MCF 10A (cell line): ENCODE measurements at regions of chr15 and their contacts with region 1.

Region 1: GRCh38 chr15:52018693-52019387 is at the start of gene MAPK6:
- DNase-seq: peak; percentile 90
- H3K4me3 Mint-ChIP-seq: peak within 1 kb of the TSS; percentile 95
- H3K27ac Mint-ChIP-seq: peak within 1 kb of the TSS; percentile 99
- H3K4me1 Mint-ChIP-seq: peaks cover 17% of the 10 kb centered on the region
- H3K27me3 Mint-ChIP-seq: no peaks in the 10 kb centered on the region
- CTCF ChIP-seq: no peak
- total RNA-seq, gene MAPK6: 106 and 114 TPM in 2 replicates

Region 2: GRCh38 chr15:51842852-51843737 is 175.7 kb before region 1 on chr15:
- CTCF ChIA-PET with region 1: no interaction called
- POLR2A ChIA-PET with region 1: no interaction called
- intact Hi-C with region 1: no loop called
- DNase-seq: peak; percentile 75
- H3K4me3 Mint-ChIP-seq: peak overlapping the region; percentile 9
- H3K27ac Mint-ChIP-seq: peak overlapping the region; percentile 69
- H3K4me1 Mint-ChIP-seq: peaks cover 54% of the 10 kb centered on the region
- H3K27me3 Mint-ChIP-seq: no peaks in the 10 kb centered on the region
- CTCF ChIP-seq: no peak

Region 3: DNA sequence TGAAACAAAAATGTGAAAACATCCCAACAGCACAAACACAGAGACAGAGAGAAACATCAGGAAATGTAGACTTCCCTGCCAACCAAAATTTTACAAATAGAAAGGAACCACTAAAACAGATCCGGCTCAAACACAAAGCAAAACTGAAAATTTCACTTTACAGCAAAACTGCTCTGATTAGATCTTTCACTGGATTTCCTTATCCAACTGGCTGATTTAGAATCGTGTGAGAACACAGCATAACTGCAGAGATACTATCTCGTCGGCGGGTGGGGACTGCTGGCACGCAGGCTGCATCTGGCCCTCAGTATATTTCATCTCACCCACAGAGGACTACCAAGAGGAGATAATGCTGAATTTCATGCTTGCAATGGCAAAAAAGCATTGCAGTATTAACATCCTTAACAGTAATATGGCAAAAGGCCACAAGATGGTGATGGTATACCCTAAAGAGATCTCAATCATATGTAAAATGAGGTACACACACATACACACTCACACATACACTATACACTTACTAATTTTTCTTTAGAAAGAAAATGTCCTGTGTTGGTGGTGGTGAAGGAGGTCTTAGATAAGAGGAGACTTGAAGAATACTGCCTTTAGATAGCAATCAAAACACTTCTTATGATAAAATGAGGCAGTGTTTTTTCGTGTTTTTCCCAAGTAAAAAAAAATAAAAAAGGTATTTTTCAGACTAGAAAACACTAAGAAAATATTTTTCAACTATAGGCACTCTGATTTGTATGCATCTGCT is 36.6 kb before region 1 on chr15:
- CTCF ChIA-PET with region 1: interaction called, 3 read pairs
- POLR2A ChIA-PET with region 1: interaction called, 38 read pairs
- intact Hi-C with region 1: loop called (anchors 1 kb)
- DNase-seq: peak; percentile 78
- H3K4me3 Mint-ChIP-seq: peak overlapping the region; percentile 31
- H3K27ac Mint-ChIP-seq: peak overlapping the region; percentile 77
- H3K4me1 Mint-ChIP-seq: peaks cover 12% of the 10 kb centered on the region
- H3K27me3 Mint-ChIP-seq: no peaks in the 10 kb centered on the region
- CTCF ChIP-seq: peak; percentile 82

Region 4: GRCh38 chr15:52005748-52006701 is 12.8 kb before region 1 on chr15:
- CTCF ChIA-PET with region 1: interaction called, 3 read pairs
- POLR2A ChIA-PET with region 1: interaction called, 42 read pairs
- intact Hi-C with region 1: no loop called
- DNase-seq: peak; percentile 48
- H3K4me3 Mint-ChIP-seq: no peak overlapping the region
- H3K27ac Mint-ChIP-seq: peak overlapping the region; percentile 19
- H3K4me1 Mint-ChIP-seq: peaks cover 19% of the 10 kb centered on the region
- H3K27me3 Mint-ChIP-seq: no peaks in the 10 kb centered on the region
- CTCF ChIP-seq: no peak

Region 5: DNA sequence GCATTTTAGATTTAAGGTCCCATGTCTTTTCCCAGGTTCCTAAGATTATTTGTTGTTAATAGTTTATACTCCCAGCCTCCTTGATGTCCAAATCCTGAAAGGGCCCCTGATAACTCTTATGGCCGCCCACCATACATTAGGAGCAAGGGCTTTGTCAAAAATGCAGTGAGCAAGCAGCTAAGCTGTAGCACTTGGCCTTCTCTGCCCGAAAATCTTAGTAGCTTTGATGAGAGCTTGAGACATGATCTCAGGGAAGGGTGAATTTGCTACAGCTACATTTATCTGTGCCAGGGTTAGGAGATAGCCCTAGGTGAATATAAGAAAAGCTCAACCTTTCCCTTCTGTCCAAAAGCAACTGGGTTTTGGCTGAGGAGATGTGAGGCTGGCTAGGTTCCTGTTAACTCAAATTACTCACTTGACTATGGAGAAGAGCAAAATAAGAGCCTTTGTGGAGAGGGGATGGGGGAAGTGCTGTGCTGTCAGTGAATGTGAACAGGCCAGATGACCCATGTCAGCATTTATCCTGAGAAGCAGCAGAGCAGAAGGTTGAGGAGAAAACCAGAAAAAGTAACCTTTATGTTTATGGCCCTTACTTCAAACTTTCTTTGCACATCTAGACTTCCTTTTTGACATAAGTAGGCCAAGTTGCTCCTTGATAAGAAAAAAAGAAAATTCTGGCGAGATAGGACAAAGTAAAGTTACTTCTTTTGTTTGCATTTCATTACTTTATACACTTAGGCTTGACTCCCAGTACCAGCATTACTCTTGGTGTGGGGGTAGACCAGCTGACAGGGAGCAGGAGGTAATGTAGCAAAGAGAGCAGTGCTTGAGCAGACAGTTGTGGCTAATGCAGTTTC is 21.3 kb after region 1 on chr15:
- CTCF ChIA-PET with region 1: no interaction called
- POLR2A ChIA-PET with region 1: interaction called, 86 read pairs
- intact Hi-C with region 1: no loop called
- DNase-seq: no peak
- H3K4me3 Mint-ChIP-seq: no peak overlapping the region
- H3K27ac Mint-ChIP-seq: peak overlapping the region; percentile 77
- H3K4me1 Mint-ChIP-seq: peaks cover 41% of the 10 kb centered on the region
- H3K27me3 Mint-ChIP-seq: no peaks in the 10 kb centered on the region
- CTCF ChIP-seq: no peak

Region 6: GRCh38 chr15:52093539-52094502 is 75.0 kb after region 1 on chr15:
- CTCF ChIA-PET with region 1: no interaction called
- POLR2A ChIA-PET with region 1: interaction called, 102 read pairs
- intact Hi-C with region 1: no loop called
- DNase-seq: peak; percentile 96
- H3K4me3 Mint-ChIP-seq: peak overlapping the region; percentile 48
- H3K27ac Mint-ChIP-seq: peak overlapping the region; percentile 99
- H3K4me1 Mint-ChIP-seq: peaks cover 34% of the 10 kb centered on the region
- H3K27me3 Mint-ChIP-seq: no peaks in the 10 kb centered on the region
- CTCF ChIP-seq: no peak

Region 7: GRCh38 chr15:52139599-52140491 is 121.0 kb after region 1 on chr15:
- CTCF ChIA-PET with region 1: interaction called, 6 read pairs
- POLR2A ChIA-PET with region 1: interaction called, 5 read pairs
- intact Hi-C with region 1: loop called (anchors 1 kb)
- DNase-seq: peak; percentile 80
- H3K4me3 Mint-ChIP-seq: no peak overlapping the region
- H3K27ac Mint-ChIP-seq: peak overlapping the region; percentile 91
- H3K4me1 Mint-ChIP-seq: peaks cover 23% of the 10 kb centered on the region
- H3K27me3 Mint-ChIP-seq: no peaks in the 10 kb centered on the region
- CTCF ChIP-seq: peak; percentile 83